AG04450 (cell line): ENCODE measurements at regions of chr10 and their contacts with region 1.

Region 1: GRCh38 chr10:133124357-133125211 is 35.4 kb upstream of the KNDC1 start:
- DNase-seq: no peak
- H3K4me3 ChIP-seq: no peak overlapping the region
- H3K27ac ChIP-seq: no peak overlapping the region
- H3K27me3 ChIP-seq: no peaks in the 10 kb centered on the region
- CTCF ChIP-seq: peak; percentile 40

Region 2: DNA sequence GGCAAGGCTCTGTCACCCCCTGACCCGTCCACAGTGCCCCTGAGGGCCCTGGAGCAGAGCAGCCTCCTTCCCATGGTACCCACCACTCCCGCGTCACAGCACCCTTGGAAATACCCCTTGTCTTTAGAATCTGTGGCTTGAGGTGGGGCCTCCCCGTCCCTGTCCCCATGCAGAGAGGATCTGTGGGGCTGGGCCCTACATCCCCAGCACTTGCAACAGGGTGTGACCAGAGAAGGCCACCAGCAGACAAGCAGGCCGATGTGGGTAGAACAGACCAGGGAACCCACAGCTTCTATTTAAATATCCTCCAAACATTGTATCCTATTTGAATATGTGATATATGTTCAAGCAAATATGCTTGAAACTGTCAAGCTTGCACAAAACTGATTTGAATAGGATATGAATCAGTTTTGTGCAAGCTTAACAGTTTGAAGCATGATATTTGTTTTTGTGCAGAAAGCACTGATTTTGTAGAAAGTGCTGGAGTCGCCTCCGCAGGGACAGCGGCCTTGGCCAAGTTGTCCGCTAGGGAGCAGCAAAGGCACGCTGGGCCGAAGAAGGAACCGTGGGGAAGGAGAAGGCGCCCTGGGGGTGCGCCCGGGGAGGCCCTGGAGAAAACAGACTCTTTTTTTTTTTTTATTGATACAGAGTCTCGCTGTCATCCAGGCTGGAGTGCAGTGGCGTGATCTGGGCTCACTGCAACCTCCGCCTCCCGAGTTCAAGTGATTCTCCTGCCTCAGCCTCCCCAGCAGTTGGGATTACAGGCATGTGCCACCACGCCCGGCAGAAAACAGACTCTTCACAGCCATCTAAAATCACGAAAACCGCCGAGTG is 184.4 kb before region 1 on chr10:
- CTCF ChIA-PET with region 1: interaction called, 10 read pairs
- POLR2A ChIA-PET with region 1: no interaction called
- DNase-seq: peak; percentile 11
- H3K4me3 ChIP-seq: no peak overlapping the region
- H3K27ac ChIP-seq: no peak overlapping the region
- H3K27me3 ChIP-seq: no peaks in the 10 kb centered on the region
- CTCF ChIP-seq: peak; percentile 87

Region 3: DNA sequence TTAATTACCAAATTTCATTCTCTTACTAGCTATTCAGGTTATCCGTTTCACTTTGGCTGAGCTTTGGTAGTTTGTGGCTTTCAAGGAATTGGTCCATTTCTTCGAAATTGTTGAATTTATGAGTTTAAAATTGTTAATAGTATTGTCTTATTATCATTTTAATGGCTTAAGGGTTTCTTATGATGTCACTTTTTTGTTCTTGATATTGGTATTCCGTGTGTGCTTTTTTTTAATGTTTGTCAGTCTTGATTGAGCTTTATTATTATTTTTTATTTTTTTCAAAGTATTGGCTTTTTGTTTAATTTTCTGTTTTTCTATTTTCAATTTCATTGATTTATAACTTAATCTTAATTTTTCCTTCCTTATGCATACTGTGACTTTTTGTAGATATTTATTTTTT is 476.1 kb after region 1 on chr10:
- CTCF ChIA-PET with region 1: no interaction called
- POLR2A ChIA-PET with region 1: no interaction called
- DNase-seq: no peak
- H3K4me3 ChIP-seq: no peak overlapping the region
- H3K27ac ChIP-seq: no peak overlapping the region
- H3K27me3 ChIP-seq: no peaks in the 10 kb centered on the region
- CTCF ChIP-seq: no peak